AG04449 (cell line): ENCODE measurements at regions of chr1 and their contacts with region 1.

Region 1: DNA sequence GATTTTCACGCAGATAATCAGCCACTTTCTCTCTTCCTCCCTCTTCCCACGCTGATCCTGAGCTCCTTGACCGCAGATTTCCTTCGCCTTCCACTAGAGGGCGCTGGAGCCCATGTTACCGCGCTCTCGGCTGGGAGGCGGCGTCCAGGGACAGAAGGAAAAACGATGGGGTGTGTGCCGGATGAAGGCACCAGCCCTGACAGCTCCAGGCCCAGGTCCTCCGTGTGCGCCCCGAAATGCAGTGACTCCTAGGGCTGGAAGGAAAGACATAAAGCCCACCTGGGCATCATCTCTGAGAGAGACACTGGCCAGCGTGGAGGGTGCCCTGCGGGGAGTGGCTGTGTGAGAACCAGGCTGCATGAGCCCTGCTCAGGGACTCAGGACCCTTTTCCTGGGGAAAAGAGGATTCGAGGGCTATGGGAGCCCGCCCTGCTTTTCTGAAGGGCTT is 44.9 kb upstream of the CYP2J2 start:
- DNase-seq: no peak
- H3K4me3 ChIP-seq: 0 out of 2 replicates have a peak overlapping the region, but pooled peaks have one; percentile 12
- CTCF ChIP-seq: peak; percentile 95

Region 2: DNA sequence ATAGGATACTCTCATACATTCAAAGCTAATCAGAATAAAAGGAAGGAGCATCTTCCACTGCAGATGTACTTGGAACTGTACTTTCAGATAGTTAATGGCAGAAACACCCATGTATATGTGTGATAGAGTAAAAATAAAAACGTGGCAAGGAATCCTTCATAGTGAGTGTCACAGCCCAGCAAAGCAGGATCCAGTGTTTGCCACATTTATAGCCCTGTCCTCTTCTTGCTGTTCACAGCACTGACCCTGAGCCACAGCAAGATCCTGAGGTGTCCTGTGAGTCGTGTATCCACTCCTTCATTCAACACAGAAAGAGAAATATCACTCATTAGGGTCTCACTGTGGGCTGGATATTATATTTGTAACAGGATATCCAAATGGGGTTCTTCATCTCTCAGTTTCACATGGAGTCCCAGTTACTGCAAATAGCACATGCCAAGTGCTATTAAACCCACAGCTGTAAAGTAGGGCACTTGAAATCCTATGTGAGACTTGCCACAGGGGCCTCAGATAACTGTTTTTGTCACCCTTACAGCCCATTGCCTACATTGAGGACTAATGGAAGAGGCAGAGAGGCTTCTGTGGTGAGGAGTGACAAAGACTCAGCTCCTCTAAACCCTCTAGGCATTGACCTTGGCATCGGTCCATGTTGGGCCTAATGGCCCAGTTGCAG is 86.2 kb before region 1 on chr1:
- CTCF ChIA-PET with region 1: no interaction called
- POLR2A ChIA-PET with region 1: no interaction called
- DNase-seq: no peak
- H3K4me3 ChIP-seq: no peak overlapping the region
- CTCF ChIP-seq: no peak

Region 3: DNA sequence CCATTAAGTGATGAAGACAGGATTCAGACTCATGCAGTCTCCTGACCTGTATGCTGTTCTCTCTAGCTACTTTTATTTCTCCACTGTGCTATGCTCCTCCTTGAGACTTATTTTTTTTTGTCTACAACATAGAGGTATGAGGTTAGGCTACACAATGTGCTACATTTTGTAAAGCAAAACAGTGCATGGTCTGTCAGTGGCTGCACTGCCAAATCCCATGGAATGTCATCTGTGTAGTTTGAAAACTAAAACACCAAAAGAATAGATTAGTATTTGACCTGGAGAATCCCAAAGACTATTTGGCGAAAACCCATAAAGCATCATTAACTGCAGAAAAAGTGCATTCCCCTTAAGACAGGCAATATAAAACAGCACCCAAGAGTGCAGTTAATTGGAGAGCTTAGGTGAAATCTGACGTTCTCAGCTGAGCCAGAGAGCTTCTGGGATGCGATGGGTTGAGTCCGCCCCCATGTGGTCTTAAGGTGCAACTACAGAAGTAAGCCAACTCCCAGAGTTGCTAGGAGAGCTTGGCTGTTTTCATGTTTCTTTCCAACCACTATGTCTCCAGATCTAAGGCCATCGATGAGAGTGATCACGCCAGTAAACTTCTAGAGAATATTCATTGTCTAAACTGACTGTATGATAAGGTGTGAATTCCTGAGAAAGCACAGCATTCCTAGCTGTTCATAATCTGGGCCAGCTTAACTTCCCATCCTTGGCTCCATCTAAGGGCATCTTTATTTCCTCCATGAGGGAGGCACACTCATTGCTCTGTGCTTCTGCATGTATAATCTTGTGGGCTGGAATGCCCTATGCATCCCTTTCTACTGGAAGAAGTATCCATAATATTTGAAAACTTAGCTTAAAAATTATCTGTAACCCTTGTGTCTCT is 24.2 kb before region 1 on chr1:
- CTCF ChIA-PET with region 1: interaction called, 16 read pairs
- POLR2A ChIA-PET with region 1: no interaction called
- DNase-seq: peak; percentile 9
- H3K4me3 ChIP-seq: no peak overlapping the region
- CTCF ChIP-seq: peak; percentile 96

Region 4: GRCh38 chr1:59986516-59987310 is 15.2 kb after region 1 on chr1:
- CTCF ChIA-PET with region 1: interaction called, 35 read pairs
- POLR2A ChIA-PET with region 1: no interaction called
- DNase-seq: no peak
- H3K4me3 ChIP-seq: no peak overlapping the region
- CTCF ChIP-seq: no peak

Region 5: GRCh38 chr1:60129911-60130310 is 158.4 kb after region 1 on chr1:
- CTCF ChIA-PET with region 1: interaction called, 27 read pairs
- POLR2A ChIA-PET with region 1: no interaction called
- DNase-seq: no peak
- H3K4me3 ChIP-seq: no peak overlapping the region
- CTCF ChIP-seq: peak; percentile 15